Activated CD4-positive, alpha-beta T cell treated with anti-CD3 and anti-CD28 coated beads, Interleukin-2, amount 10 ng/mL, durations not matched to agents 24 days and 14 days (primary cell): ENCODE measurements at regions of chr12 and their contacts with region 1.

Region 1: GRCh38 chr12:56041552-56042429 is at the start of gene RPS26:
- DNase-seq: peak; percentile 97
- H3K4me3 Mint-ChIP-seq: peak within 1 kb of the TSS; percentile 100
- H3K27ac Mint-ChIP-seq: peak within 1 kb of the TSS; percentile 99
- H3K4me1 Mint-ChIP-seq: peaks cover 50% of the 10 kb centered on the region
- H3K27me3 Mint-ChIP-seq: no peaks in the 10 kb centered on the region
- total RNA-seq, gene RPS26: 40.5 and 46.3 TPM in 2 replicates

Region 2: GRCh38 chr12:55817346-55818139 is 224.2 kb before region 1 on chr12 and contains the starts of genes ORMDL2 and SARNP:
- intact Hi-C with region 1: loop called (anchors 2 kb)
- DNase-seq: peak; percentile 99
- H3K4me3 Mint-ChIP-seq: no peak within 1 kb of the TSS
- H3K27ac Mint-ChIP-seq: peak within 1 kb of the TSS; percentile 39
- H3K4me1 Mint-ChIP-seq: peaks cover 23% of the 10 kb centered on the region
- H3K27me3 Mint-ChIP-seq: no peaks in the 10 kb centered on the region
- total RNA-seq, gene ORMDL2: 49.8 and 55.8 TPM in 2 replicates
- total RNA-seq, gene SARNP: 76.6 and 81.6 TPM in 2 replicates

Region 3: GRCh38 chr12:55996715-55997534 is 44.9 kb before region 1 on chr12 and contains the start of gene SUOX:
- intact Hi-C with region 1: loop called (anchors 1 kb)
- DNase-seq: peak; percentile 86
- H3K4me3 Mint-ChIP-seq: peak within 1 kb of the TSS; percentile 87
- H3K27ac Mint-ChIP-seq: peak within 1 kb of the TSS; percentile 53
- H3K4me1 Mint-ChIP-seq: peaks cover 28% of the 10 kb centered on the region
- H3K27me3 Mint-ChIP-seq: no peaks in the 10 kb centered on the region
- total RNA-seq, gene SUOX: 9.3 and 10.2 TPM in 2 replicates

Region 4: GRCh38 chr12:56029666-56030293 is 12.0 kb before region 1 on chr12:
- intact Hi-C with region 1: loop called (anchors 1 kb)
- DNase-seq: peak; percentile 86
- H3K4me3 Mint-ChIP-seq: no peak overlapping the region
- H3K27ac Mint-ChIP-seq: peak overlapping the region; percentile 77
- H3K4me1 Mint-ChIP-seq: peaks cover 43% of the 10 kb centered on the region
- H3K27me3 Mint-ChIP-seq: no peaks in the 10 kb centered on the region